Activated CD4-positive, alpha-beta memory T cell treated with anti-CD3 and anti-CD28 coated beads, Interleukin-2, amount 10 ng/mL, durations not matched to agents 7 days and 5 days (primary cell): ENCODE measurements at regions of chr2 and their contacts with region 1.

Region 1: DNA sequence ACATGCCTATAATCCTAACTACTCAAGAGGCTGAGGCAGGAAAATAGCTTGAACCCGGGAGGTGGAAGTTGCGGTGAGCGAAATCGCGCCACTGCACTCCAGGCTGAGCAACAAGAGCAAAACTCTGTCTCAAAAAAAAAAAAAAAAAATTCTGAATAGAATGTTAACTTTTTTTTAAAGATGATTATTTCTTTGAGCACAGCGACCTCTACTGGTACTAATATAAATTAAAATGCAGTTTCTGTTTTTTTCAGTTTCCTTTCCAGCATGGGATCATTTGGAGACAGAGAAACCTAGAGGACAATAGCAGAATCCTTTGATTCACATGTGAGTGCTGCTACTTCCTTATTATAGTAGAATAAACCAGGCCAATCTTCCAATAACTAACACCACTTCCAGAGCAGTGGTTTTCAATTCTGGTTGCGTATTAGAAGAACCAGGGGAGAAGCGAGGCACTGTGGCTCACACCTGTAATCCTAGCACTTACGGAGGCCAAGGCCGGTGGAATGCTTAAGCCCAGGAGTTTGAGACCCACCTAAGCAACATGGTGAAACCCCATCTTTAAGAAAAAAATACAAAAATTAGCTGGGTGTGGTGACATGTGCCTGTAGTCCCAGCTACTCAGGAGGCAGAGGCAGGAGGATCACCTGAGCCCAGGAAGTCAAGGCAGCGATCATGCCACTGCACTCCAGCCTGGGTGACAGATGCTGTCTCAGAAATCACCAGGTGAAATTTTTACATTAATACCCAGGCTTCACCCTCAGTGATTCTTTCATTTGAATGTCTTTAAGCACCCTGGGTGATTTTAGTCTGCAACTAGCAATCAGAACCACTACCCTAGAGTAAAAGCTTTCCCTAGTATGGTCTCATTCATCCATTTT is 10.1 kb downstream of the SRSF7 start:
- DNase-seq: no peak
- H3K4me3 Mint-ChIP-seq: no peak overlapping the region
- H3K27ac Mint-ChIP-seq: peak overlapping the region; percentile 49
- H3K4me1 Mint-ChIP-seq: peaks cover 57% of the 10 kb centered on the region
- H3K27me3 Mint-ChIP-seq: no peaks in the 10 kb centered on the region

Region 2: GRCh38 chr2:38535744-38536506 is 205.2 kb before region 1 on chr2:
- CTCF ChIA-PET with region 1: interaction called, 12 read pairs
- POLR2A ChIA-PET with region 1: interaction called, 6 read pairs
- DNase-seq: peak; percentile 81
- H3K4me3 Mint-ChIP-seq: peak overlapping the region; percentile 41
- H3K27ac Mint-ChIP-seq: no peak overlapping the region
- H3K4me1 Mint-ChIP-seq: peaks cover 10% of the 10 kb centered on the region
- H3K27me3 Mint-ChIP-seq: peaks cover 14% of the 10 kb centered on the region

Region 3: DNA sequence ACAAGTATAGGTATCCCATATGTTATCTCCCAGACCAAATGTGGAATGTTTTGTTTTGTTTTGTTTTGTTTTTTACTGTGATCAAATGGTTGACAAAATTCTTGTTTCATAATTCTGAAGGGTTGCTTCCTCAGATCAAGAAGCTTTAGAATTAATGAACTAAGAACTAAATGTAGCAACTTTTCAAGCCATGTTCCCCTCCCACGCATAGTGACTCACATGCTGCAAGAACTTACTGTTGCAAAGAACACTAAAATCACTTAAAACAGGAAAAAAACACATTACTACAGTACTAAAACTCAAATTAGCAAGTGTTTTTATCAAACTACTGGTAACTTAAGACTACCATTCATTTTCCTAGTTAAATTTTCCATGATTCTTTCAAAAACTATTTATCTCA is 168.9 kb before region 1 on chr2:
- CTCF ChIA-PET with region 1: interaction called, 5 read pairs
- POLR2A ChIA-PET with region 1: interaction called, 29 read pairs
- DNase-seq: no peak
- H3K4me3 Mint-ChIP-seq: no peak overlapping the region
- H3K27ac Mint-ChIP-seq: no peak overlapping the region
- H3K4me1 Mint-ChIP-seq: peaks cover 48% of the 10 kb centered on the region
- H3K27me3 Mint-ChIP-seq: no peaks in the 10 kb centered on the region

Region 4: DNA sequence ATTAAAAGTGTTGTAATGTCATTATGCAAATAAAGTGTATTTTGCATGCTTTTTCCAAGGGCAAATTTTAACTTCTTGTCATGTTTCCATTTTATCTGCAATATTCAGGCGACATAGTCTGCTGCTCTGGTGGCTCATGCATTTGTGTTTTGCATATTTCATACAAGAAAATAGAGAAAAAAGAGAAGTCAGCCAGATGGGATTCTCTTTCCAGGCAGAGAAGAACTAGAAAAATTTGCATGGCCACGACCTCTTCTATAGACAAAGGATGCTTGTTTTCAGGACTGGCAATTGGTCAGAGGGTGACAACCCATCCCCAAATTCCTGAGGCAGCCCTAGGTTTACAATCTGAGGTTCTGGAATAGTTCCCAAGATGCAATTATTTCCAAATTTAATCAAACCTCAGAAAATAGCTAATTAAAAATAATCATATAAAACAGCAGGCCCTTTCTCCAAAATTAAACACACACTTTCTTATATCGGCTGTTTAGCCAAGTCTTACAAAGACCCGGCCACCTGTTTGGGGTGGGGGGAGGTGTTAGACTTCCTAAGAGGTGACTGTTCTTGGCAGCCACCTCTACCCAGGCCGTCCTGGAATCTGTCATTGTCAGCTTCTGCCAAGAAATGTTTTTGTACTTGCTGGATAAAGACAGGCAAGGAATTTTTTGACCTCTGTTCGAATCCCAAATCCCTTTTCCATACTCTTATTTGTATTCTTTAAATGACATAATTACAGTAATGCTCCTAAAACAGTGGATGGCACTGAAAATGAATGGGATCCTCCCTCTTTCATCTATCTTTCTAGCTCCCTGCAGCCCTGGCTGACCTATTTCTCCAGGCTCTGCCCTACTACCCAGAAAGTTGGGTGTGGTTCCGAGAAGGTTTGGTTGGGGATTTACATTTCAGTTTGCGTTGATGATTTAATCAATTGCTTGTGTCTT is 400.5 kb after region 1 on chr2:
- CTCF ChIA-PET with region 1: no interaction called
- POLR2A ChIA-PET with region 1: no interaction called
- DNase-seq: peak; percentile 71
- H3K4me3 Mint-ChIP-seq: no peak overlapping the region
- H3K27ac Mint-ChIP-seq: peak overlapping the region; percentile 93
- H3K4me1 Mint-ChIP-seq: peaks cover 72% of the 10 kb centered on the region
- H3K27me3 Mint-ChIP-seq: no peaks in the 10 kb centered on the region